Naive thymus-derived CD4-positive, alpha-beta T cell (primary cell): ENCODE measurements at regions of chr5 and their contacts with region 1.

Region 1: GRCh38 chr5:160508780-160509361 is 87.2 kb downstream of the PTTG1 start:
- DNase-seq: peak in 8 of 9 donors; percentile 51 to 81 (median 74)
- ATAC-seq: peak; percentile 83
- H3K4me3 ChIP-seq: no peak overlapping the region
- H3K4me3 Mint-ChIP-seq: peak overlapping the region in 2 of 10 donors; percentile 20 to 65
- H3K27ac ChIP-seq: no peak overlapping the region
- H3K27ac Mint-ChIP-seq: peak overlapping the region in 6 of 9 donors; percentile 19 to 84 (median 68)
- H3K4me1 ChIP-seq: peaks cover 9 to 32% of the 10 kb centered on the region in 2 donors
- H3K4me1 Mint-ChIP-seq: peaks cover 24 to 50% (median 29%) of the 10 kb centered on the region in 7 donors
- H3K27me3 ChIP-seq: no peaks in the 10 kb centered on the region
- H3K27me3 Mint-ChIP-seq: peaks cover 0 to 13% (median 6%) of the 10 kb centered on the region in 5 donors

Region 2: GRCh38 chr5:160418561-160419457 is 90.1 kb before region 1 on chr5 and contains the start of gene SLU7:
- CTCF ChIA-PET with region 1: no interaction called
- POLR2A ChIA-PET with region 1: no interaction called
- intact Hi-C with region 1: loop called (anchors 1 to 5 kb)
- DNase-seq: peak; percentile 80 to 93 (median 91)
- ATAC-seq: peak; percentile 86
- H3K4me3 ChIP-seq: peak within 1 kb of the TSS; percentile 94
- H3K4me3 Mint-ChIP-seq: peak within 1 kb of the TSS; percentile 91 to 100 (median 96)
- H3K27ac ChIP-seq: peak within 1 kb of the TSS; percentile 98
- H3K27ac Mint-ChIP-seq: peak within 1 kb of the TSS; percentile 95 to 100 (median 98)
- H3K4me1 ChIP-seq: peaks cover 23 to 28% of the 10 kb centered on the region in 2 donors
- H3K4me1 Mint-ChIP-seq: peaks cover 45 to 85% (median 79%) of the 10 kb centered on the region in 7 donors
- H3K27me3 ChIP-seq: no peaks in the 10 kb centered on the region
- H3K27me3 Mint-ChIP-seq: no peaks in the 10 kb centered on the region
- total RNA-seq, gene SLU7: 53.0 to 85.3 (median 77.0) TPM

Region 3: DNA sequence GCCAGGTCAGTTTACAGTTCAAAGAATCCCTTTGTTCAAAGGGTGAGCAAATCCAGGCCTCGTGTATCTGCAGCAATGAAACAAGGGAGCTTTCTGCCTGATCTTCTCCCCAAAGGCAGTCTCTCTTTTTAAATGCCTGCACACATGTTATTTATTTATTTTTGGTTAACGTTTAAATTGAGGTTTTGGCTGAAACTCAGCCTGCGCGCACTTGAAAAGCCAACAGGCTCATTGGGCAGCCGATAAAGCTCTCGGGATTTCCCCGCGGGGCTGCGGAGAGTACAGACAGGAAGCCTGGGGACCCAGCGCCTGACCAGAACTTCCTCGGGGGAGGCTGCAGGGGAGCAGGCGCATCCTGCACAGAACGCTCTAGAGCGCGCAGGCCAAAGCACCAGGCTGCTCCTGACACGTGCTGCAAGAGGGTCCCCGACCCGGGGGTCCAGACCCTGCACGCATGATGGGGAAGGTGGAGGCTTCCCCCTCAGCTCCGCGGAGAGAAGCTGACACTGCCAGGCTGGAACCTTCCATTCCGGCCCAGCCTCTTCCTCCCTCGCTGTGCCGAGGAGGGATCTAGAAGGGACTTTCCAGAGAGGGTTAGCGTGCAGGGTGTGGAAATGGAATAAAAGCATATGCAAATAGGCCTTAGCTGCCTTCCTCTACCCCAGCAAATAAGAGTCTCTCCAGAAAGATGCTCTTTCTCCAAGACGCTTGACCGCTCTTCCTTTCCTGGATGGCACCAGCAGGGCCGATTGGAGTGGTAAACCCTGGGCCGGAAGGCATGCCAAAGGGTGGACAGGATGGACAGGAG is 41.1 kb before region 1 on chr5:
- CTCF ChIA-PET with region 1: no interaction called
- POLR2A ChIA-PET with region 1: no interaction called
- intact Hi-C with region 1: loop called (anchors 1 to 2 kb)
- DNase-seq: peak; percentile 24 to 88 (median 48)
- ATAC-seq: peak; percentile 91
- H3K4me3 ChIP-seq: peak overlapping the region; percentile 69
- H3K4me3 Mint-ChIP-seq: peak overlapping the region; percentile 80 to 100 (median 88)
- H3K27ac ChIP-seq: peak overlapping the region; percentile 48
- H3K27ac Mint-ChIP-seq: peak overlapping the region; percentile 73 to 99 (median 81)
- H3K4me1 ChIP-seq: peaks cover 28 to 34% of the 10 kb centered on the region in 2 donors
- H3K4me1 Mint-ChIP-seq: peaks cover 36 to 79% (median 70%) of the 10 kb centered on the region in 7 donors
- H3K27me3 ChIP-seq: no peaks in the 10 kb centered on the region
- H3K27me3 Mint-ChIP-seq: no peaks in the 10 kb centered on the region

Region 4: DNA sequence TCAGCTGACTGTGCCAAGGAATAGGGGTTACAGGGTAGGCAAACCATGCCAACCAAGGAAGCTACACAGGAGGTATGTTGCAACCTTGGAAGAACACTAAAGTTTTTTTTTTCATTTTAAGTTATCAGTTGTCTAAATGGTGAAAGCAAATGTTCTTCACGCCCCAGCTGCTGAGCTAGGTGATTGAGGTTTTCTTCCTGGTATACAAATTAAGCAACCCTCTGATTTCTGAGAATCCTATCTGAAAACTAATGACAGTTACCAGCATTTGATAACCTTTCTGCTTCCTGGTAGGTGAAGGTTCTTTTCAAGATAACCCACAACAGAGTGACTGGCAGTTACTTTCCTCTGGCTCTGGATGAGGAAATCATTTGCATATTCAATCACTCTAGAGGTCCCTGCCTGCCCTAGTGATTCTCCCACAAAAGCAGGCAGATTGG is 148.2 kb after region 1 on chr5:
- CTCF ChIA-PET with region 1: no interaction called
- POLR2A ChIA-PET with region 1: no interaction called
- intact Hi-C with region 1: loop called in 1 of 2 experiments (anchors 5 kb)
- DNase-seq: no peak
- ATAC-seq: peak; percentile 58
- H3K4me3 ChIP-seq: no peak overlapping the region
- H3K4me3 Mint-ChIP-seq: peak overlapping the region in 1 of 10 donors; percentile 50
- H3K27ac ChIP-seq: no peak overlapping the region
- H3K27ac Mint-ChIP-seq: peak overlapping the region in 1 of 9 donors; percentile 70
- H3K4me1 ChIP-seq: no peaks in the 10 kb centered on the region
- H3K4me1 Mint-ChIP-seq: peaks cover 0 to 23% (median 0%) of the 10 kb centered on the region in 7 donors
- H3K27me3 ChIP-seq: no peaks in the 10 kb centered on the region
- H3K27me3 Mint-ChIP-seq: peaks cover 2 to 29% (median 14%) of the 10 kb centered on the region in 5 donors

Region 5: GRCh38 chr5:160787240-160787639 is 278.4 kb after region 1 on chr5:
- CTCF ChIA-PET with region 1: no interaction called
- POLR2A ChIA-PET with region 1: no interaction called
- intact Hi-C with region 1: loop called (anchors 1 to 10 kb)
- DNase-seq: no peak
- ATAC-seq: no peak
- H3K4me3 ChIP-seq: no peak overlapping the region
- H3K4me3 Mint-ChIP-seq: no peak overlapping the region
- H3K27ac ChIP-seq: no peak overlapping the region
- H3K27ac Mint-ChIP-seq: no peak overlapping the region
- H3K4me1 ChIP-seq: no peaks in the 10 kb centered on the region
- H3K4me1 Mint-ChIP-seq: no peaks in the 10 kb centered on the region
- H3K27me3 ChIP-seq: no peaks in the 10 kb centered on the region
- H3K27me3 Mint-ChIP-seq: peaks cover 0 to 17% (median 13%) of the 10 kb centered on the region in 5 donors

Region 6: GRCh38 chr5:161544350-161544765 is 1035.5 kb after region 1 on chr5:
- CTCF ChIA-PET with region 1: no interaction called
- POLR2A ChIA-PET with region 1: no interaction called
- intact Hi-C with region 1: loop called in 1 of 2 experiments (anchors 1 kb)
- DNase-seq: no peak
- ATAC-seq: no peak
- H3K4me3 ChIP-seq: no peak overlapping the region
- H3K4me3 Mint-ChIP-seq: no peak overlapping the region
- H3K27ac ChIP-seq: no peak overlapping the region
- H3K27ac Mint-ChIP-seq: no peak overlapping the region
- H3K4me1 ChIP-seq: no peaks in the 10 kb centered on the region
- H3K4me1 Mint-ChIP-seq: peaks cover 11 to 28% (median 15%) of the 10 kb centered on the region in 7 donors
- H3K27me3 ChIP-seq: peaks cover 0 to 4% of the 10 kb centered on the region in 2 donors
- H3K27me3 Mint-ChIP-seq: peaks cover 46 to 54% (median 51%) of the 10 kb centered on the region in 5 donors